GM10248 (cell line): ENCODE measurements at regions of chr10 and their contacts with region 1.

Region 1: GRCh38 chr10:30591249-30591670 is 38.3 kb downstream of the LYZL2 start:
- DNase-seq: peak; percentile 47
- CTCF ChIP-seq: peak; percentile 45

Region 2: DNA sequence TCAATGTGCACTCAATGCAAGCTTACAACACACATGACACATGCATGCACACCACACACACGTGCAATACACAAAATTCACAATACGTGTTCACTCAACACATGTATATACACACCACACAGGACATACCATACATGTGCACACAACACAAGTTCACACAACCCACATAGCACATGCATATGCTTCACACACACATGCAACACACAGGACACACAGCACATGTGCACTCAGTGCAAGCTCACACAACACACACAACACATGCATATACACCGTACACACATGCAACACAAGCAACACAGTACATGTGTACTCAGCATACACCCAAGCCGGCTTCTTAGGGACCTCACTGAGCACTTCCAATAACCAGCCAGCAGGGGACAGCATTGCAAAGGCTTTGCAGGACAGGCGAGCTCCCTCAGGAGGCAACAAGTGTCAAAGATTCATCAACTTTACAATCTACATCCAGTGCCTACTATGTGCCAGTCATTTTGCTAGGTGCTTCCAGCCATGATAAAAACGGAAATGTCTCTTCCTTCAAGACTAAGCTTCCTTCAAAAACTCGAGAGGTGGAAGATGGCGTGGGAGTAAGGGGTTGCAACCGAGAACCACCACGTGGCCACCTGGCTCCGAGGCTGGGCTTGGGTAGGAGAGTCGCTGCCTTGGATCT is 593.0 kb before region 1 on chr10:
- CTCF ChIA-PET with region 1: interaction called, 18 read pairs
- POLR2A ChIA-PET with region 1: no interaction called
- DNase-seq: peak; percentile 76
- CTCF ChIP-seq: peak; percentile 92

Region 3: GRCh38 chr10:30384701-30385201 is 206.5 kb before region 1 on chr10:
- CTCF ChIA-PET with region 1: interaction called, 167 read pairs
- POLR2A ChIA-PET with region 1: no interaction called
- DNase-seq: no peak
- CTCF ChIP-seq: peak; percentile 49

Region 4: DNA sequence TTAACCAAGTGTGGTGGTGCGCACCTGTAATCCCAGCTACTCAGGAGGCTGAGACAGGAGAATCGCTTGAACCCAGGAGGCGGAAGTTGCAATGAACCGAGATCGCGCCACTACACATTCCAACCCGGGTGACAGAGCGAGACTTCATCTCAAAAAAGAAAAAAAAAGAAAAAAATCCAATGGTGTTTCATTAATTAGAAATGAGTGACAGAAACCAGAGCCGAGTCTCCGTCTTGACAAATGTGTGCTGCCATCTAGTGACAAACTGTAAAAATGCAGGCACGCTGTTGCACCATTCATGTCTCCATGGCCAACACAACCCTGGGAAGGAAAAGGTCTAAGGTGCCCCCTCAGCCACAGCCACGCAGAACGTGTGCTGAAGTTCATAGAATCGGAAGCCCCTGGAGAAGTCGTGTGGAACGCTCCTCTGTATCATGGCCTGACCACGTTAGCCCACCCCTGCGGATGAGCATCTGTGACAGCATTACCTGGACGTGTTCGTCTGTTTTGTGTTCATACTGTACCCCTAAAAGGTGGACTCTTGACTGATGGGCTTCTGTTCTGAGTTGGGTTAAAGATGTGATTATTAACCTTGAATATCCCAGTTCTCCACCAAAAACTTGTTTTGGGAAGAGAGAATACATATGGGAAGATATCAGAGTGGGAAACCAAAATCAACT is 56.7 kb before region 1 on chr10:
- CTCF ChIA-PET with region 1: interaction called, 13 read pairs
- POLR2A ChIA-PET with region 1: no interaction called
- DNase-seq: peak; percentile 67
- CTCF ChIP-seq: peak; percentile 88

Region 5: GRCh38 chr10:30562787-30563186 is 28.5 kb before region 1 on chr10:
- CTCF ChIA-PET with region 1: interaction called, 13 read pairs
- POLR2A ChIA-PET with region 1: no interaction called
- DNase-seq: no peak
- CTCF ChIP-seq: no peak

Region 6: DNA sequence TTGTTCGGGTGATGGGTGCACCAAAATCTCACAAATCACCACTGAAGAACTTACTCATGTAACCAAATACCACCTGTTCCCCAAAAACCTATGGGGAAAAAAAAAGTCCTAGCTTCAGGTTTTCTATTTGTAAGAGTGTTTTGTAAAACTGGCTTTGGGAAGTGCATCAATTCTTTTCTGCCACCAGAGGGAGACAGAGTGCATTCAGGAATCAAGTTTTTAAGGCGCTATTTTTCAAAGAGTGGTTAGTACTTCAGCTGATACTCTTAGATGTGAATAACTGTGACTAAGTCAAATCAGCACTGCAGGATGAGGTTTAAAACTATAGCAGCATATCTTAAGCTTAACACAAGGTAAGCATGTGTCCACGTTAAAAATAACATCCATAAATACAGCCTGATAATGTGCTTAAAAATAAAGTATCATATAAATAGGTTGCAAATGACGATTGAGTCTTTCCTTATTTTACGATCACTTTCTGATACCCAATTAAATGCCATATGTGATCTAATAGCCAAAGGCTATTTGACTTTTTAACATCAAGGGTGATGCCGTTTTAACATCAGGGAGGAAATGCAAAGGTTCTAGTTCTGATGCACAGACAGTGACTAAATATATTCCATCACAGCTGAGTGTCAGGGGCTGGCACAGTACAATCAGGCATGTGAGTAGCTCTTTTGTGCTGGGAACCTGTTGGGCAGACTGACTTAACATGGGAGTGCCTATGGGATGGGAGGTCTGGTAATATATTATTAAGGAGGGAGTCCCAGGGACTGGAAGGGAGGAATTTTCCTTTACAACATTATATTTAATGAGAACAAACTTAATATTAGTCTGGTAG is 48.9 kb after region 1 on chr10:
- CTCF ChIA-PET with region 1: interaction called, 12 read pairs
- POLR2A ChIA-PET with region 1: no interaction called
- DNase-seq: peak; percentile 53
- CTCF ChIP-seq: peak; percentile 88